A549 (cell line): ENCODE measurements at regions of chr1 and their contacts with region 1.

Region 1: DNA sequence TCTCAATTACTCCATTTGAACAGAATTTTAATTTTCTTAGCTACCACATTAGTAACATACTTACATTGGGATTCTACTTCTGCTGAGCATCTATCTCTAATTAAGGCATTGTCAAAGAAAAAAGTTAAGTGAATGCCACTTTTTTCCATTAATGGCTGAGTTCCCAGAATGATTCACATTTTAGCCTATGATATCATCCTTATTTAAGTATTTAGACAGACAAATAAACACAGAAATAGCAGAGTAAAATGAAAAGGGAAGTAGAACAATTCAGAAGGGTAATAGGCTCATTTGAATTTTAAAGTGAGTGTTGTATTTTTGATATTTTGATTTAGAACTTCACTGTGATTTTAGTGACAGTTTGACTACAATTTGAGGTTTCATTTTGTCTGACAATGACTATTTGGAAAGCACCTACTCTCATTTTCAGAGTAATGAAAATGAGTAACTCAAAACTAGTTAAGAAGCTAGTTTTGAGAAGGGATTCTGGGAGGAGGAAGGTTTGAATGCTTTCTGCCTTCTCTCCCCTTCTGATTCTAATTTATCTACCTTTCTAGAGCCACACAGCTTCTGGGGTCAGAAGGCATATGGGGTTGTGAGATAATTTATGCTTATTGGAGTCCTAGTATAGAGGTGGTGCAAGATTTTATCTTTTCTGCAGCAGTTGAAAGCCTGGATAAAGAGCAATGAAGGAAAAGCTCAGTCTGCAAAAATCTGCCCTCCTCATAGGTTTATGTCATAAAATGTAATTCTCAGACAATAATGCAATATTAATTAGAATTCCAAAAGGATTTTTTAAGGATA is 15.5 kb downstream of the LYPLAL1 start:
- DNase-seq: no peak
- ATAC-seq: 0 out of 6 replicates have a peak, but pooled peaks of 1 of the 2 experiments have one; percentile 29
- H3K4me3 ChIP-seq: peak overlapping the region; percentile 5; the same call in 1 of the 3 replicates
- H3K27ac ChIP-seq: peak overlapping the region; percentile 65 to 77
- H3K4me1 ChIP-seq: peaks cover 34% of the 10 kb centered on the region
- CTCF ChIP-seq: no peak
- EP300 ChIP-seq: no peak
- POLR2A ChIP-seq: no peak
- RAD21 ChIP-seq: no peak

Region 2: DNA sequence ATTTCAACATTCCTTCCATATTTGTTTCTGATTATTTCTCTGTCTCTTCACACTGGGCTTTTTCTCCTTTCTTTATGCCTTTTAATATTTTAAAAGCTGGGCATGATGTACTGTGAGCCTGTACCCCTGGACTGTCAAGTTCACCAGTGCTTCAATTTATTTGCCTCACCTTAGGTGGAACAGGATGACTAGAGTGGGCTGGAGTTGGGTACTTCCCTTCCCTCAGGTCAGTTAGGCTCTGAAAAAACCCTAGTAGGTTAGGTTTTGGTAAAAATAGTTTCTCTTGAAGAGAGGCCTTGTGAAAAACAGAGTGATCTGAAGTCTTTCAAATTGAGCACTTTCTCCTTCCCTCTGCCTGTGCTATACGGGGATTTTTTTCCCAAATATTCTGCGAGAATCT is 178.5 kb before region 1 on chr1:
- CTCF ChIA-PET with region 1: no interaction called
- POLR2A ChIA-PET with region 1: no interaction called
- DNase-seq: no peak
- ATAC-seq: no peak
- H3K4me3 ChIP-seq: no peak overlapping the region
- H3K27ac ChIP-seq: no peak overlapping the region
- H3K4me1 ChIP-seq: no peaks in the 10 kb centered on the region
- CTCF ChIP-seq: no peak
- EP300 ChIP-seq: no peak
- POLR2A ChIP-seq: no peak
- RAD21 ChIP-seq: no peak

Region 3: GRCh38 chr1:219173758-219174588 is 15.2 kb before region 1 on chr1 and contains the start of gene LYPLAL1:
- CTCF ChIA-PET with region 1: interaction called, 3 read pairs
- POLR2A ChIA-PET with region 1: interaction called, 12 read pairs
- DNase-seq: peak; percentile 82 to 90
- ATAC-seq: peak; percentile 97 to 98
- H3K4me3 ChIP-seq: peak within 1 kb of the TSS; percentile 74
- H3K27ac ChIP-seq: peak within 1 kb of the TSS; percentile 93 to 97
- H3K4me1 ChIP-seq: peaks cover 26% of the 10 kb centered on the region
- CTCF ChIP-seq: peak; percentile 26; the same call in 2 of the 3 replicates
- EP300 ChIP-seq: no peak
- POLR2A ChIP-seq: peak; percentile 92
- RAD21 ChIP-seq: peak; percentile 34 to 62
- polyA plus RNA-seq, gene LYPLAL1: 49.4 and 61.2 TPM in 2 replicates